AG04450 (cell line): ENCODE measurements at regions of chr11 and their contacts with region 1.

Region 1: DNA sequence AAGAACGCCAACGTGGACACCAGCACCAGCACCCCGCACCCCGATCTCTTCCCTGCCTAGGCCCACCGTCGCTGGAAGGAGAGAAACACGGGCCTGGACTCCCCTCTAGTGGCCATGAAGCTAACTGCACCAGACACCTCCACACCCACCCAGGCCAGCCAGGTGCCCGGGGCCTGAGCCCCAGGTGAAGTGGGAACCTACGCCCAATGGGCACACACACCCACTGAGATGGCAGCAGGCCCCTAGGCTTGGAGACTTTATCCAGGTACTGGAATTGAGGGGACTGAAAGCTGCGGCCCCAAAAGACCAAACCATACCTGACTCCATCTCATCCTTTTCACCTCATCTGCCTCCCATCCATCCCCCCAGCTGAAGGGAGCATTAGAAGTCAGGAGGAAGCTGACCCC is 81.0 kb downstream of the BUD13 start:
- DNase-seq: no peak
- H3K4me3 ChIP-seq: no peak overlapping the region
- H3K27ac ChIP-seq: no peak overlapping the region
- H3K27me3 ChIP-seq: peaks cover 11% of the 10 kb centered on the region
- CTCF ChIP-seq: peak; percentile 87

Region 2: DNA sequence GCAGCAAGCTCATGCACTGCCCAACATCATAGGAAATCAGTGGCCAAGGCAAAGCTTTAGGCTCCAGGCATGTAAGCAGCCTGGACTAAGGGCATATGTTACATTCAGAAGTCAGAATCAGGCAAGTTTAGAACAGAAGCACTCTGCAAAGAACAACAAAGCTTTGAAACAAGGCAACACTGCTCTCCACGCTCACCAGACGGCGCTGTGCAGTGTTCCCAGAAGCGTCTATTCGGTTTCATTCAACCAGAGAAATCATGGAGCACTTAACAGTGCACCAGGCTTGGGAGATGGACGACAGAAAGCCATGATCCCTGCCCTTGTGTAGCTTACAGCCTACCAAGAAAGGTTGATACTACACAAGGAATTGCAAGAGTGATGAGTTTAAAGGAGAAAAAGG is 474.8 kb before region 1 on chr11:
- CTCF ChIA-PET with region 1: interaction called, 10 read pairs
- POLR2A ChIA-PET with region 1: no interaction called
- DNase-seq: no peak
- H3K4me3 ChIP-seq: no peak overlapping the region
- H3K27ac ChIP-seq: no peak overlapping the region
- H3K27me3 ChIP-seq: no peaks in the 10 kb centered on the region
- CTCF ChIP-seq: peak; percentile 71

Region 3: DNA sequence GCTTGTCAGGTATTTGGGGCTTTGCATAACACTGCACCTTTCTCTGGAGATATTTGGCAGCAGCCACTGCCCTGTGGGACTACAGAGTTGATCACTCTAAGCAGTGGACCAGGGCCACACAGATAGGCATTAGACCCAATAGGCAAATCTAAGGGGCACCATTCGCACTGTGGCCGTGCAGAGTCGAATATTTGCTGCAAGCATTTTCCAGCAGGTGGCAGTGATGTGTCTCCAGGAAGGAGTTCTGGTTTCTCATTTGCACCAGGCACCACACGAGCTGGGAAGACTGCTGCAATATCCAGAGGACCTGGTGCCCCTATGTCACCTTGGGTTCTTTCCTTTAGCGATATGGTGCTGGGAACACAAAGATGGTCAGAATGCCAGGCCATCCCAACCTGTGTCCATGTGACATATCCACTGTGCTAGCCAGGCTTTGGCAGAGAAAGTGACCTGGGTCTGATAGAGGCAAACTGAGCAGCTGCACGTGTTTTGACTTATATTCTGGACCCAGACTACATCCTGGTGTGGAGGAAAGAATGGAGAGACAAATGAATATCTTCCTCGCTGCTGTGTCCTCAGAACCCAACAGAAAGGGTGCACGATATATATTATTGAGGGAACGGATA is 237.6 kb before region 1 on chr11:
- CTCF ChIA-PET with region 1: interaction called, 15 read pairs
- POLR2A ChIA-PET with region 1: no interaction called
- DNase-seq: no peak
- H3K4me3 ChIP-seq: no peak overlapping the region
- H3K27ac ChIP-seq: no peak overlapping the region
- H3K27me3 ChIP-seq: no peaks in the 10 kb centered on the region
- CTCF ChIP-seq: peak; percentile 57

Region 4: DNA sequence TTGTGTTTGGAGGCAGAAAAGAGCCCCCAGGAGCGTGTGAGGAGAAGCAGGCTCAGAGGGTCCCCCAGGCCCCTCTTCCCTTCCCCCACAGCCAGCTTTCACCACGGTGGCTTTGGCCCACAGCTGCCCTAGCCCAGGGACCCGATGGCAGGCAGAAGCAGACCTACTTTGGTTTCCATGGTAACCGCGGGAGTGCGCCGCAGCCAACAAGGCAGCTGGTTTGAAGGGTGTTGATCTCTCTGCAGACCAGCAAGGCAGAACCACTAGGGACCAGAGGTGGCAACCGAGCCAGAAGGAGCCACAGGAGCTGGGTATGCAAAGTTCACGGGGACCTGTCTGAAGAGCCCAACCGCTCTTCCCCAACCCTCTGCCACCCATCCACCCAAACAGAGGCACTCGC is 11.6 kb after region 1 on chr11:
- CTCF ChIA-PET with region 1: interaction called, 16 read pairs
- POLR2A ChIA-PET with region 1: no interaction called
- DNase-seq: no peak
- H3K4me3 ChIP-seq: no peak overlapping the region
- H3K27ac ChIP-seq: no peak overlapping the region
- H3K27me3 ChIP-seq: peaks cover 24% of the 10 kb centered on the region
- CTCF ChIP-seq: no peak